Endothelial cell of umbilical vein (primary cell): ENCODE measurements at regions of chr11 and their contacts with region 1.

Region 1: GRCh38 chr11:59158206-59159068 is 13.5 kb upstream of the DTX4 start:
- DNase-seq: peak; percentile 76
- H3K4me3 ChIP-seq: no peak overlapping the region
- H3K27ac ChIP-seq: no peak overlapping the region
- H3K4me1 ChIP-seq: peaks cover 2% of the 10 kb centered on the region
- H3K27me3 ChIP-seq: peaks cover 6 to 7% of the 10 kb centered on the region in 2 experiments
- CTCF ChIP-seq: peak; percentile 72 to 82
- POLR2A ChIP-seq: no peak

Region 2: DNA sequence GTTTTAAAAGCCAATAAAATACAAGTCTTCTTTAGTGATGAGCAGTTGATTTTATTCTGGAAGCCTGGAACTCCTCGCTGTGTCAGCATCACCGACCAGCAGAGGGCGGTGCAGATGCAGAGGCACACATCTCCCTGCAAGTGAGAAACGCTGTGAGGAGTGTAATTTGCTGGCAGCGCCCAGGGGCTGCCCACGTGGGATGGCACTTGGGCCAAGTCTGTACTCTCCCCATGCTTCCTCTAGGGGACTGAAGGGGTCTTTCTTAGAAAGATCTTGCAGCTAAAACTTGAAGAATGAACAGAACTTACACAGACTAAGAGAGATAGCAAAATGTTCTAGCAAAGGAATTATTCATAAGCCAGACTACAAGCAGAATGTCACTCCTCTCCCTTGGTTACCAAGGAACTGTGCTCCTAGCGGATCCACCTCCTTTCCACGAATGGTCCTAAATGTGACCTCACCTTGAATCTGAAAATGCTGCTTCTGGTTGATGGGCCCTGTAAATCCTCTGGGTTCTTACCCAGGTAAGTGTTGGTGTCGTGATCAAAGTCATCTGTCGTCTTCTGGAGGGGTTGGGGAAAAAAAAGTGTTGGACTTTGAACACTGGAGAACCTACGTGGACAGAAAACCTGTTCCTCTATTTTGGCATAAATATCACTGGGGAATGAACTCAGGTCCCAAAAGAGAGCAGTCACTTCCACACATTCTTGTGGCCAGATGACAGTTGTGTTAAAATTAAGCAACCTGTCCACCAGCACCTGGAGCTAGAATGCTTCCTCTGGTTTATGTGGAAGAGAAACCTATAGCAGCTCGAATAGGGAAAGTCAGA is 504.1 kb before region 1 on chr11:
- CTCF ChIA-PET with region 1: interaction called, 17 read pairs
- POLR2A ChIA-PET with region 1: no interaction called
- dilution Hi-C with region 1: no loop called
- intact Hi-C with region 1: loop called (anchors 1 kb)
- DNase-seq: peak; percentile 75
- H3K4me3 ChIP-seq: no peak overlapping the region
- H3K27ac ChIP-seq: no peak overlapping the region
- H3K4me1 ChIP-seq: no peaks in the 10 kb centered on the region
- H3K27me3 ChIP-seq: peaks cover 5 to 24% of the 10 kb centered on the region in 2 experiments
- CTCF ChIP-seq: peak; percentile 91 to 94
- POLR2A ChIP-seq: no peak

Region 3: GRCh38 chr11:58958500-58958899 is 199.9 kb before region 1 on chr11:
- CTCF ChIA-PET with region 1: interaction called, 8 read pairs
- POLR2A ChIA-PET with region 1: no interaction called
- dilution Hi-C with region 1: no loop called
- intact Hi-C with region 1: loop called (anchors 1 kb)
- DNase-seq: peak; percentile 9
- H3K4me3 ChIP-seq: no peak overlapping the region
- H3K27ac ChIP-seq: no peak overlapping the region
- H3K4me1 ChIP-seq: no peaks in the 10 kb centered on the region
- H3K27me3 ChIP-seq: peaks cover 0 to 4% of the 10 kb centered on the region in 2 experiments
- CTCF ChIP-seq: peak in 1 of 2 donors; percentile 31
- POLR2A ChIP-seq: no peak

Region 4: DNA sequence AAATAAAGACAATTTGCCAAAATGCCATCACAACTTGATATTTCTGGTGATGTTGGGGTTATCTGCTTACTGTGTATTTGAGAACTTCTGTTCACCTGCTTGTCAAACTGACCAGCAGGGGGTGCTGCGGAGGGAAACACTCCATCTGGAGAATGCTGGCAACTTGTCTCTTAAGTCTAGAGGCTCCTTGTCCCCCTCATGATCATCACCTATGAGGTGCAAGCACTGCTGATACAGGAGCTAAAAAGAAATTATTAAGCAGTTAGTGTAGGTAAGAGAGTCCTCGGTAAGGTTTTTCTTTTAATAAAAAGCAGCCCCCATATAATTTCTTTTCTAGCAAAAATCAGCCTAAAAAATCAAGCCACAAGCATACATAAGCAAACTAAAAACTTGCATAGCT is 105.0 kb before region 1 on chr11:
- CTCF ChIA-PET with region 1: interaction called, 71 read pairs
- POLR2A ChIA-PET with region 1: no interaction called
- dilution Hi-C with region 1: no loop called
- intact Hi-C with region 1: loop called (anchors 1 kb)
- DNase-seq: peak; percentile 59
- H3K4me3 ChIP-seq: no peak overlapping the region
- H3K27ac ChIP-seq: no peak overlapping the region
- H3K4me1 ChIP-seq: no peaks in the 10 kb centered on the region
- H3K27me3 ChIP-seq: peaks cover 2 to 4% of the 10 kb centered on the region in 2 experiments
- CTCF ChIP-seq: peak; percentile 69 to 74
- POLR2A ChIP-seq: no peak

Region 5: GRCh38 chr11:59097113-59097708 is 61.2 kb before region 1 on chr11:
- CTCF ChIA-PET with region 1: interaction called, 63 read pairs
- POLR2A ChIA-PET with region 1: no interaction called
- dilution Hi-C with region 1: no loop called
- intact Hi-C with region 1: loop called (anchors 1 kb)
- DNase-seq: peak; percentile 64
- H3K4me3 ChIP-seq: no peak overlapping the region
- H3K27ac ChIP-seq: no peak overlapping the region
- H3K4me1 ChIP-seq: peaks cover 2% of the 10 kb centered on the region
- H3K27me3 ChIP-seq: peaks cover 4% of the 10 kb centered on the region in 2 experiments
- CTCF ChIP-seq: peak; percentile 41 to 65
- POLR2A ChIP-seq: no peak

Region 6: GRCh38 chr11:59106363-59107336 is 51.8 kb before region 1 on chr11 and contains the start of gene FAM111B:
- CTCF ChIA-PET with region 1: interaction called, 17 read pairs
- POLR2A ChIA-PET with region 1: no interaction called
- dilution Hi-C with region 1: no loop called
- intact Hi-C with region 1: no loop called
- DNase-seq: peak; percentile 91
- H3K4me3 ChIP-seq: peak within 1 kb of the TSS; percentile 44 to 74 (median 56)
- H3K27ac ChIP-seq: peak within 1 kb of the TSS; percentile 39
- H3K4me1 ChIP-seq: peaks cover 20% of the 10 kb centered on the region
- H3K27me3 ChIP-seq: peaks cover 0 to 3% of the 10 kb centered on the region in 2 experiments
- CTCF ChIP-seq: no peak
- POLR2A ChIP-seq: peak; percentile 29
- total RNA-seq, gene FAM111B: 17.4 and 21.9 TPM in 2 replicates

Region 7: GRCh38 chr11:59142530-59143507 is 15.6 kb before region 1 on chr11 and contains the start of gene FAM111A:
- CTCF ChIA-PET with region 1: interaction called, 91 read pairs
- POLR2A ChIA-PET with region 1: interaction called, 3 read pairs
- dilution Hi-C with region 1: no loop called
- intact Hi-C with region 1: loop called (anchors 1 kb)
- DNase-seq: peak; percentile 91
- H3K4me3 ChIP-seq: peak within 1 kb of the TSS; percentile 69 to 90 (median 74)
- H3K27ac ChIP-seq: peak within 1 kb of the TSS; percentile 74
- H3K4me1 ChIP-seq: peaks cover 32% of the 10 kb centered on the region
- H3K27me3 ChIP-seq: no peaks in the 10 kb centered on the region
- CTCF ChIP-seq: peak; percentile 17 to 47
- POLR2A ChIP-seq: peak; percentile 66
- total RNA-seq, gene FAM111A: 53.0 and 57.4 TPM in 2 replicates

Region 8: DNA sequence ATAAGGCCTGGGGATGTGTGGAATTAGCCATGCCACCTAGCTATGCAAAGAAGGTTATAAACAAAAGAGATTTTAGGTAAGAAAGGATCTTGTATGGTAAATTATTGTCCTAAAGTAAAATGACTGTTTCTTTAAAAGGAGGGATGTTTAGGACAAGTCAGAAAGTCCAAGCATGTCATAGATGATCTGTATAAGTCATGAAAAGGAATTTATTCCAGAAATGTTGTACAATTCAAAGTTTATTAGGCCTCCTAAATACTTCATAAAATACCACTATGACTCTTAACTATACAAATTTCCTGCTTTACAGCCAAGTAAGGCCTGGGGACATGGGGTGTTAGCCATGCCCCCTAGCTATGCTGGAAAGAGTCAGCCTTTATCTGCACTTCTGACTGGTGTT is 245.1 kb after region 1 on chr11:
- CTCF ChIA-PET with region 1: no interaction called
- POLR2A ChIA-PET with region 1: no interaction called
- dilution Hi-C with region 1: no loop called
- intact Hi-C with region 1: no loop called
- DNase-seq: no peak
- H3K4me3 ChIP-seq: no peak overlapping the region
- H3K27ac ChIP-seq: no peak overlapping the region
- H3K4me1 ChIP-seq: no peaks in the 10 kb centered on the region
- H3K27me3 ChIP-seq: no peaks in the 10 kb centered on the region
- CTCF ChIP-seq: no peak
- POLR2A ChIP-seq: no peak